Spleen (tissue), 13 donors: ENCODE measurements at regions of chr6 and their contacts with region 1.

Region 1: DNA sequence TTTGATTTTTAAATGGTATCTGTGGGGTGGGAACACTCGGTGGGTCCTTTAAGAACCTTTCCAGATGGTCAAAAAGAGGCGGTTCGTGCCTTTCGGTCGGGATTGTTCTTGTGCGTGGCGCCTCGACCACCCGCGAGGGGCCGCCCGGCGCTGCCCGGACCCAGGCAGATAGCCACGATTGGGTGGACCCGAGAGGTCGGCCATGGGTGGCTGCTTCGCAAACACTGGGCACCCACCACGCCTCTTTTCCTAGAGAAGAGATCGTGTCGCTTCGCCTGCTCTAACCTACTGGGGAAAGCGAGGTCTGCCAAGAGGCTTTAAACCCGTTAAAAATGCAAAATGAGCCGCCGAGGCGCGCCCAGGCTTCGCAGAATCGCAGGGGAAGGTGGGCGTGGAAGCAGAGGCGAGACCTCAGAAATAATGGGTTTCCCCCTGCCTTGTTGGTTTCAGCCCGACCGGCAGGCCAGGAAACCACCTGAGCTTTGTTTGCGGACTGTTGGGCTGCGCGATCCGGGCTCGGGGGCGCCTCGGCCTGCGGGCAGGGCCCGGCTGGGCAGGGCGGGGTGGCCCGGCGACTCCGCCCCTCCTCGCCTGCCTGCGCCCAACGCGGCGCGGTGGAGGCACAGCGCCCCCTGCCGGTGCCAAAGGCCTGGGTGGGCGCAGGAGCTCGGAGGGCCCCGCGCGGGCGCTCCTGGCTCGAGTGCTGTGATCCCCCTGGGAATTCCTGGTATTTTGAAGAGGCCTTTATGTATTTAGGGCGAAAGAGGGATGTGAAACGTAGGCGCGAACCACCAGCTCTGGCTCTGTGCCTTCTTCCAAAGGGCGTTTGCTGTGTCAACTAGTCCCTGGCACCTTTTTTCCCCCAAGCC is 1.6 kb downstream of the MARCKS start:
- DNase-seq: peak; percentile 98
- H3K4me3 ChIP-seq: peak overlapping the region; percentile 49 to 79 (median 62)
- H3K27ac ChIP-seq: peak overlapping the region; percentile 91 to 97 (median 94)
- H3K4me1 ChIP-seq: peaks cover 0 to 76% (median 48%) of the 10 kb centered on the region in 6 donors
- H3K27me3 ChIP-seq: peaks cover 0 to 70% (median 28%) of the 10 kb centered on the region in 7 donors
- CTCF ChIP-seq: peak; percentile 53 to 99 (median 93)
- POLR2A ChIP-seq: peak in 2 of 3 donors; percentile 74 to 96

Region 2: GRCh38 chr6:112780498-112781096 is 1078.1 kb before region 1 on chr6:
- intact Hi-C with region 1: loop called (anchors 5 kb)
- DNase-seq: no peak
- H3K4me3 ChIP-seq: no peak overlapping the region
- H3K27ac ChIP-seq: no peak overlapping the region
- H3K4me1 ChIP-seq: peaks cover 0 to 6% (median 0%) of the 10 kb centered on the region in 6 donors
- H3K27me3 ChIP-seq: no peaks in the 10 kb centered on the region
- CTCF ChIP-seq: peak; percentile 40 to 80 (median 73)
- POLR2A ChIP-seq: no peak

Region 3: DNA sequence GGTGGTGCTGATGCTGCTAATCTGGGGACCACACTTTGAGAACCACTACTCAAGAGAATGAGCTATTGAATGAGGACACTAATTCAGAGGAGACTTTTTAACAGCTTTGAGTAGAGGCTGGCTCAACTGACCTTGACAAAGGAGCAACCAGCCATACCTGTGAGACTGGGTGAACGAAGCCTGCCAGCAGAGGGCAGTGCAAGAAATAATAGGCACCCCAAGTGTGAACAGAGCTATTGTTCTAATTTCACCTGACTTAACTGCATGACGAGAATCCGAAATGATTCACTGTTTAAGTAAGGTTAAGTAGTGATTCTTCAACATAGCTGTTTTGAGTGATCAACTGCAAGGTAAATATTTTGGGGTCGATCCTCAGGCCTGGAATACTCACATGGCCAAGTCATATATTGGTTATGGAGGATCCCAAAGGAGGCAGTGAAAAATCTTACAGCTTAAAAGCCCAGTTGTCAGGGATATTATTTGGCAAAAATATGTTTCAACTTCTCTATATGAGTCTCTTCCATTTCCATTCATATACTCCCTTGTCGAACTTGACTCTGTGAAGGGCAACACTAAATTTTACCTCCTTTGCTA is 552.1 kb before region 1 on chr6:
- intact Hi-C with region 1: loop called (anchors 10 kb)
- DNase-seq: peak; percentile 86
- H3K4me3 ChIP-seq: no peak overlapping the region
- H3K27ac ChIP-seq: no peak overlapping the region
- H3K4me1 ChIP-seq: peaks cover 0 to 5% (median 0%) of the 10 kb centered on the region in 6 donors
- H3K27me3 ChIP-seq: no peaks in the 10 kb centered on the region
- CTCF ChIP-seq: peak in 10 of 11 experiments; percentile 48 to 81 (median 70)
- POLR2A ChIP-seq: no peak

Region 4: DNA sequence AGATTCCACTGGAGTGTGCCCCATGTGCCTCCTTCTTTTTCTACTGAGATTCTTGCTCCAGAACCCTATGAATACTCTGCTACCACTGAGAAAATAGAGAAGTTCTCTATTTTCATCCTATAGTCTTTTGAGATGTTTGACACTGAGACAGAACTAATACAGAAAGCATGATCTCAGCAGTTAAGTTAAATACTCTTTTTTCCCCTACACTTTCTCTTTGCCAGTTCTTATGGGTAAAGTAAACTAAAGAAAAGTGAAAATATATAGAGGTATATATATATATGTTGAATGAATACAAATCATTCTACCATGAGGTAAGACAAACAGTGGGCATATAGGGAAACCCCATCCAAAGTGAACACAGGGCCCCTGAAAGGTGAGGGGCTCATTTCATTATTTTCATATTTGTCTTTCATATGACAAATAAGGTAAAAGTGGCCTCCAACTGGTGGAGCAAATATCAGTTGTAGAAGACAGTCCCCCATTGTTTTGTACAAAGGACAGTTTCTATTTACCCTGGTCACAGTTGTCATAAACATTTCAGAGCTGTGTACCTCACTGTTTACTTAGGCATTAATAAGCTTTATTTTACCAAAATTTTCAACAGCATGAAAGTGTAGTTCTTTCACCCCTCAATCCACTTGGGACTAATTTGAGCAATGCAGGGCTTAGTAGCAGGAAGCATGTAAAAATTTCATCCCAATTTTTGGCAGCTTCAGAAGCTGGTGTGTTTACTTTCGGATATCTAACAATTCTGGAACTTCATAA is 189.9 kb before region 1 on chr6:
- intact Hi-C with region 1: no loop called
- DNase-seq: no peak
- H3K4me3 ChIP-seq: no peak overlapping the region
- H3K27ac ChIP-seq: peak overlapping the region in 3 of 8 donors; percentile 3 to 17 (median 10)
- H3K4me1 ChIP-seq: peaks cover 0 to 18% (median 7%) of the 10 kb centered on the region in 6 donors
- H3K27me3 ChIP-seq: no peaks in the 10 kb centered on the region
- CTCF ChIP-seq: no peak
- POLR2A ChIP-seq: no peak

Region 5: GRCh38 chr6:113796038-113796437 is 62.7 kb before region 1 on chr6:
- intact Hi-C with region 1: no loop called
- DNase-seq: no peak
- H3K4me3 ChIP-seq: no peak overlapping the region
- H3K27ac ChIP-seq: no peak overlapping the region
- H3K4me1 ChIP-seq: no peaks in the 10 kb centered on the region
- H3K27me3 ChIP-seq: no peaks in the 10 kb centered on the region
- CTCF ChIP-seq: no peak
- POLR2A ChIP-seq: no peak

Region 6: DNA sequence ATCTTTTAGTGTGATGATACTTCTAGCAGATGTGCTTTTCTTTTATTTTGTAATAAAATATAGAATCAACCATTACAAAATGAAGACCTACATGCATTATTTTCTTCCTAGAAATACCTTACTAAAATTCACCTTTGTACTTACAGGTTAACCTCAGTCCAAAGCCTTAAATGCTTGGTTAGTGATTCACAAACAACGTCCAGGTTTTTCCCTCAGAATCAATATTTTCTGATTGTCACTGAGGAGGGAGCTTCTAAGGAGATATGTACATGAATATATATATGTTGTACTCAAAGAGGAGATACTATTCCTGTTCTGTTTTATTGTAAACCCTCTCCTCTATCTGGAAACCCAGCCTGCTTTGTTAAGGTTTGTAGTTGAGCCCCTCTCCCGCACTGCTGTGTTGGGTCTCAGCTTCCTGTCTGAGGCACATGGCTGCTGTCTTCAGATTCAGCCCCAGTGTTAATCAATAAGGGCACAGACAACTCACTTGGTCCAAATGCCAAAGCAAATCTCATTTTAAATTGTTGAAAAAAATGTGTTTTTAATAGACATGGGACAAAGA is 518.0 kb after region 1 on chr6:
- intact Hi-C with region 1: no loop called
- DNase-seq: no peak
- H3K4me3 ChIP-seq: no peak overlapping the region
- H3K27ac ChIP-seq: no peak overlapping the region
- H3K4me1 ChIP-seq: no peaks in the 10 kb centered on the region
- H3K27me3 ChIP-seq: no peaks in the 10 kb centered on the region
- CTCF ChIP-seq: no peak
- POLR2A ChIP-seq: no peak